Left ventricle myocardium inferior (tissue), 1 donor: ENCODE measurements at regions of chr21 and their contacts with region 1.

Region 1: DNA sequence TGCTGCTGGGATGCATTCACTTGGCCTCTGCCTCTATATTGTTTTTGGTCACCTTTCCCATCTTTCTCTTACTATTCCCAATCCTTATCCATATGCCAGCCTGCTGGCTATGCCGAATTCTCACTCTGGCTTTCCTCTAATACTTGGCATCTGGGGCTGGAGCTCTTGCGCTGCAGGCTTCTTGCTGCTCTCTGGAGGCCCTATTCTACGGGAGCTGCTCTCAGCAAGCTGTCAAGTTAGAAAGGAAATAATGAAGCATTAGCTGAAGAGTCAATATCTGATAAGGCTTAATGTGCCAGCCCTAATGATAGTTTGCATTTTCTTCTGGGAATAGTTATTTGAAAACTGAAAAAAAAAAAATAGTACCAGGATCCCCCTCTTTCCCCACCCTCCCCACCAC is 125.3 kb upstream of the CYYR1 start:
- DNase-seq: no peak
- H3K4me3 ChIP-seq: no peak overlapping the region
- H3K27ac ChIP-seq: no peak overlapping the region
- H3K4me1 ChIP-seq: no peaks in the 10 kb centered on the region
- H3K27me3 ChIP-seq: no peaks in the 10 kb centered on the region
- CTCF ChIP-seq: no peak

Region 2: GRCh38 chr21:26070822-26071425 is 627.5 kb before region 1 on chr21:
- intact Hi-C with region 1: no loop called
- DNase-seq: no peak
- H3K4me3 ChIP-seq: peak overlapping the region; percentile 8
- H3K27ac ChIP-seq: peak overlapping the region; percentile 40
- H3K4me1 ChIP-seq: peaks cover 48% of the 10 kb centered on the region
- H3K27me3 ChIP-seq: no peaks in the 10 kb centered on the region
- CTCF ChIP-seq: no peak

Region 3: GRCh38 chr21:26495283-26495845 is 203.1 kb before region 1 on chr21:
- intact Hi-C with region 1: no loop called
- DNase-seq: no peak
- H3K4me3 ChIP-seq: no peak overlapping the region
- H3K27ac ChIP-seq: no peak overlapping the region
- H3K4me1 ChIP-seq: no peaks in the 10 kb centered on the region
- H3K27me3 ChIP-seq: no peaks in the 10 kb centered on the region
- CTCF ChIP-seq: no peak

Region 4: GRCh38 chr21:26739189-26739588 is 40.8 kb after region 1 on chr21:
- intact Hi-C with region 1: loop called (anchors 2 kb)
- DNase-seq: no peak
- H3K4me3 ChIP-seq: no peak overlapping the region
- H3K27ac ChIP-seq: no peak overlapping the region
- H3K4me1 ChIP-seq: no peaks in the 10 kb centered on the region
- H3K27me3 ChIP-seq: no peaks in the 10 kb centered on the region
- CTCF ChIP-seq: no peak